ENCODE measurements at regions of chr4 and their contacts with region 1.

Region 1: DNA sequence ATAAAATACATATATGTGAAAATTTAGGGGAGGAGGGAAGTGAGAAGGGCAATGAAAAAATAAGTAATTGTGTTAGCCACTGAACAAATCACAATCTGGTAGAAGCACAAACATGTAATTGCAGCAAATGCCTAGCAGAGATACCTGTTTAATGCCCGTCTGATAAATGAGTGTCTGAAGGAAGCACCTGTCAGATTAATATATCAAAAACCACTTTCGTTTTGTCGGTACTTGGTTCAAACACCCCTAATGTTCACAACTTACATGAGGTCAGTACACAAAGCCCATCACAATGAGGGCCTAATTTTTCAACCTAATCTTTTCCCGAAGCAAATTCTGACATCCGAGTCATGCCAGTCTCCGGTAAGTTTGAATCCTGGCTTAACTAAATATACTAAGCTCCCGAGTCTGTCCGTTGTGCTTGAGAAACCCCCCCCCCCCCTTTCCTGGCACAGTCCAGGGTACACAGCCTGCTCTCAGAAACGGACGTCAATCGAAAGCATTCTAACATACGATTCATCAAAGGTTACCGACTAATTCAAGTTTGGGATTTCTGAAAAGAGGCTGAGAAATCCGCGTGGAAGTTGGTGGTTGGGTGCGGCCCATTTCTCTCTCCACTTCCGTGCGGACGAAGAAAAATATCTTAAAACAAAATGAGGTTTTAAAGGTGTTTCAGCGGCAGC is 758 bp downstream of the SDAD1 start:
- DNase-seq: no peak
- H3K4me3 Mint-ChIP-seq: peak overlapping the region; percentile 85
- H3K27ac Mint-ChIP-seq: peak overlapping the region; percentile 57
- H3K4me1 Mint-ChIP-seq: peaks cover 29% of the 10 kb centered on the region
- H3K27me3 Mint-ChIP-seq: peaks cover 3% of the 10 kb centered on the region

Region 2: GRCh38 chr4:75940692-75941253 is 49.2 kb before region 1 on chr4 and contains the start of gene NAAA:
- CTCF ChIA-PET with region 1: interaction called, 4 read pairs
- POLR2A ChIA-PET with region 1: interaction called, 5 read pairs
- intact Hi-C with region 1: loop called (anchors 1 kb)
- DNase-seq: peak; percentile 91
- H3K4me3 Mint-ChIP-seq: peak within 1 kb of the TSS; percentile 96
- H3K27ac Mint-ChIP-seq: peak within 1 kb of the TSS; percentile 93
- H3K4me1 Mint-ChIP-seq: peaks cover 20% of the 10 kb centered on the region
- H3K27me3 Mint-ChIP-seq: no peaks in the 10 kb centered on the region
- total RNA-seq, gene NAAA: 31.7 to 32.2 TPM

Region 3: GRCh38 chr4:76087007-76087769 is 97.2 kb after region 1 on chr4:
- CTCF ChIA-PET with region 1: interaction called, 29 read pairs
- POLR2A ChIA-PET with region 1: no interaction called
- intact Hi-C with region 1: no loop called
- DNase-seq: peak; percentile 31
- H3K4me3 Mint-ChIP-seq: no peak overlapping the region
- H3K27ac Mint-ChIP-seq: no peak overlapping the region
- H3K4me1 Mint-ChIP-seq: peaks cover 4% of the 10 kb centered on the region
- H3K27me3 Mint-ChIP-seq: peaks cover 2% of the 10 kb centered on the region

Region 4: GRCh38 chr4:76198411-76199237 is 208.6 kb after region 1 on chr4:
- CTCF ChIA-PET with region 1: no interaction called
- POLR2A ChIA-PET with region 1: no interaction called
- intact Hi-C with region 1: loop called (anchors 5 kb)
- DNase-seq: peak; percentile 73
- H3K4me3 Mint-ChIP-seq: no peak overlapping the region
- H3K27ac Mint-ChIP-seq: peak overlapping the region; percentile 20
- H3K4me1 Mint-ChIP-seq: peaks cover 44% of the 10 kb centered on the region
- H3K27me3 Mint-ChIP-seq: no peaks in the 10 kb centered on the region